ENCODE measurements at regions of chr15 and their contacts with region 1.

Region 1: DNA sequence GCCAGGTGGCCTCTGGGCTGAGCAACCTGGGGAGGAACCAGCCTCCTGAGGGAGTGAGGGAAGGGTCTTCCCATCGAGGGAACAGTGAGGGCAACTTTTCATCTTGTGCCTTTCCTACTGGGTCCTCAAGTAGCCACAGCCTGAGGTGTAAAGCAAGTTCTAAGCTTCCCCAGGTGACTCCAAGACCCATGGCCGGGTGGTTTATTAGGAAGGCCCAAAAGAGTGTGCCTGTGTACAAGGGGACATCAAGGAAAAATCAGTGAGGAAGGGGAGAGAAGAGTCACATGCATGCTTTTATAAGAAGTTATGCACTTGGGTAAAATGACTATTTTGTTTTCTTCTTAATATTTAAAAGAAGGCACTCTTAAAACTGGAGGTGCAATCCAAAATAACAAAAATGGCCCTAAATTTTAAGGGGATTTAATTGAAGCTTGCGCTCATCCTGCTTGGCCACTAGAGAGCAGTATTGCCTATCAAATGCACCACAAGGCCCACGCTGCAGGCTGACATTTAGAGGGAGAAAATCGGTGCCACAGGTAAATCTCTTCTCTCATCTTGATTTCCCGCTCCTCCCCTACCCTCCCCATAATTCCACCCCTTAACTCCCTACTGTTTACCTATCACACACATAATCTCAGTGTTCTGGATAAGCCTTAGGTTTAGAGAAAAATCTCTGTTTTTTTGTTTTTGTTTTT is 6.7 kb downstream of the NANOGP8 start:
- DNase-seq: peak in 2 of 5 donors; percentile 6 to 15
- H3K4me3 ChIP-seq: no peak overlapping the region
- H3K4me3 Mint-ChIP-seq: no peak overlapping the region
- H3K27ac ChIP-seq: no peak overlapping the region
- H3K27ac Mint-ChIP-seq: no peak overlapping the region
- H3K4me1 ChIP-seq: no peaks in the 10 kb centered on the region
- H3K4me1 Mint-ChIP-seq: no peaks in the 10 kb centered on the region
- H3K27me3 ChIP-seq: no peaks in the 10 kb centered on the region
- H3K27me3 Mint-ChIP-seq: peaks cover 12 to 22% of the 10 kb centered on the region in 2 donors

Region 2: GRCh38 chr15:35150361-35150760 is 72.0 kb after region 1 on chr15:
- CTCF ChIA-PET with region 1: no interaction called
- POLR2A ChIA-PET with region 1: no interaction called
- DNase-seq: no peak
- H3K4me3 ChIP-seq: no peak overlapping the region
- H3K4me3 Mint-ChIP-seq: no peak overlapping the region
- H3K27ac ChIP-seq: no peak overlapping the region
- H3K27ac Mint-ChIP-seq: no peak overlapping the region
- H3K4me1 ChIP-seq: no peaks in the 10 kb centered on the region
- H3K4me1 Mint-ChIP-seq: no peaks in the 10 kb centered on the region
- H3K27me3 ChIP-seq: no peaks in the 10 kb centered on the region
- H3K27me3 Mint-ChIP-seq: peaks cover 3 to 6% of the 10 kb centered on the region in 2 donors

Region 3: GRCh38 chr15:35168464-35168863 is 90.1 kb after region 1 on chr15:
- CTCF ChIA-PET with region 1: no interaction called
- POLR2A ChIA-PET with region 1: no interaction called
- DNase-seq: no peak
- H3K4me3 ChIP-seq: no peak overlapping the region
- H3K4me3 Mint-ChIP-seq: no peak overlapping the region
- H3K27ac ChIP-seq: no peak overlapping the region
- H3K27ac Mint-ChIP-seq: no peak overlapping the region
- H3K4me1 ChIP-seq: no peaks in the 10 kb centered on the region
- H3K4me1 Mint-ChIP-seq: no peaks in the 10 kb centered on the region
- H3K27me3 ChIP-seq: no peaks in the 10 kb centered on the region
- H3K27me3 Mint-ChIP-seq: peaks cover 0 to 2% of the 10 kb centered on the region in 2 donors

Region 4: DNA sequence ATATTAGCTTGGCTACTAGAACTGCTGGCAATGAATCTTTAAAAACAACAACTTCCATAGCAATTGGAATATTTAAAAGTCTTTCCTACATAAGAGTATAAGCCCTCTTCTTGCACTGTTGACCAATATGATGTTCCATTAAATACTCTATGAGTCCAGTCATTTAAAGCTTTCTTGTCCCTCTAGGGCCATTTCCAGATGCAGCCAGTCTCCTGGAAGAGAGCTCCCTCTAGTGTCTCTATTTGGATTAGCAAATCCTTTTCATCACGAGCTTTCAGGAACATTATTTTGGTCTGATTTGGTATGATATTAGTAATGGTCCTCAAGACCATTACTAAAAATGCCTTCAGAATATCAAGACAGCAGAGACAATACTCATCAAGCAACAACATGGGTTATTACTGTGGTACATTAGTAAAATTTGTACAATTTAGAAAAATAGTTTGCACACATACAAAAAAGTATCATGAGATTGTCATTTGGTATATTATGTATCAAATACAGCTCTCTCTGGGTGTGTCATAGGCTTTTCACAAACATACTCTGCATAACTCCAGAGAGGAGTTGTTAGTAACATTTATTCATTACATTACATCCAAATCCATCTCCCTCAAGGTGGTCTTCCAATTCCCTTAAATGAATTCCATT is 366.3 kb after region 1 on chr15:
- CTCF ChIA-PET with region 1: interaction called, 10 read pairs
- POLR2A ChIA-PET with region 1: no interaction called
- DNase-seq: no peak
- H3K4me3 ChIP-seq: no peak overlapping the region
- H3K4me3 Mint-ChIP-seq: no peak overlapping the region
- H3K27ac ChIP-seq: no peak overlapping the region
- H3K27ac Mint-ChIP-seq: peak overlapping the region in 1 of 8 donors; percentile 20
- H3K4me1 ChIP-seq: no peaks in the 10 kb centered on the region
- H3K4me1 Mint-ChIP-seq: no peaks in the 10 kb centered on the region
- H3K27me3 ChIP-seq: no peaks in the 10 kb centered on the region
- H3K27me3 Mint-ChIP-seq: no peaks in the 10 kb centered on the region

Measured in CD8-positive, alpha-beta memory T cell (primary cell).